MCF 10A (cell line): ENCODE measurements at regions of chr12 and their contacts with region 1.

Region 1: GRCh38 chr12:62581288-62582064 is 114.8 kb downstream of the MON2 start:
- DNase-seq: peak; percentile 53
- H3K4me3 Mint-ChIP-seq: no peak overlapping the region
- H3K27ac Mint-ChIP-seq: no peak overlapping the region
- H3K4me1 Mint-ChIP-seq: no peaks in the 10 kb centered on the region
- H3K27me3 Mint-ChIP-seq: no peaks in the 10 kb centered on the region
- CTCF ChIP-seq: peak; percentile 49

Region 2: DNA sequence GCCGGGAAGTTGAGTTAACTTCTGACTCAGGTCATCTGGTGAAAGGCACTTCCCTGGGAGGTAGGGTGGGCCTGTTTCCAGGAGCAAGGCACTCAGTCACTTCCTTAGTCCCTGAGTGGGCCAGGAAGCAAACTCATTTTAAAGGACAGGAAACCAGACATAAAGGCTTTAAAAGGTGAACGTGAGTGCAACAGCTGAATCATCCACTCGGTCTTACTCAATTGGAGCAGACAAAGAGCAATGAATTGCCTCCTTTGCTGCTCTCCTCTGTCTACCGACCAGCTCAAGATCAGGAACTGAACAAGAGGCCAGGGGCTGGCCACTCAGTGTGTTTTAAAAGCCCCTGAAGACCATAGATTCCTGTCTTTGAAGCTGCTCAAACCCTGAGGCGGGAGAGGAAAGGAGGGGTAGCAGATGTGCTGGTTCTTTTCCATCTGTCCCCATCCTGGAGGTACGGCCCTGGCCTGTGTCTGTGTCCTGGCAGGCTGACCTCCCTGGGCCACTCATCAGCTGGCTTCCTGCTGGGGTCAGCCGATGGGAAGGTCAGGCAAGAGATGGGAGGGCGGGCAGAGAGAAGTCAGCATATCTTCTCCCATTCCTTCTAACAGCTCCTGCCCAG is 204.6 kb after region 1 on chr12:
- CTCF ChIA-PET with region 1: interaction called, 29 read pairs
- POLR2A ChIA-PET with region 1: no interaction called
- intact Hi-C with region 1: no loop called
- DNase-seq: peak; percentile 94
- H3K4me3 Mint-ChIP-seq: no peak overlapping the region
- H3K27ac Mint-ChIP-seq: peak overlapping the region; percentile 0
- H3K4me1 Mint-ChIP-seq: peaks cover 13% of the 10 kb centered on the region
- H3K27me3 Mint-ChIP-seq: no peaks in the 10 kb centered on the region
- CTCF ChIP-seq: no peak

Region 3: GRCh38 chr12:62799126-62799736 is 217.8 kb after region 1 on chr12:
- CTCF ChIA-PET with region 1: interaction called, 241 read pairs
- POLR2A ChIA-PET with region 1: interaction called, 6 read pairs
- intact Hi-C with region 1: loop called (anchors 1 kb)
- DNase-seq: peak; percentile 74
- H3K4me3 Mint-ChIP-seq: no peak overlapping the region
- H3K27ac Mint-ChIP-seq: no peak overlapping the region
- H3K4me1 Mint-ChIP-seq: no peaks in the 10 kb centered on the region
- H3K27me3 Mint-ChIP-seq: no peaks in the 10 kb centered on the region
- CTCF ChIP-seq: peak; percentile 86